OCI-LY7 (cell line): ENCODE measurements at regions of chr1 and their contacts with region 1.

Region 1: GRCh38 chr1:154335025-154335714 is 9.8 kb downstream of the ATP8B2 start:
- DNase-seq: peak; percentile 89
- H3K4me3 ChIP-seq: no peak overlapping the region
- H3K27ac ChIP-seq: no peak overlapping the region
- H3K4me1 ChIP-seq: peaks cover 8% of the 10 kb centered on the region
- CTCF ChIP-seq: peak; percentile 95

Region 2: DNA sequence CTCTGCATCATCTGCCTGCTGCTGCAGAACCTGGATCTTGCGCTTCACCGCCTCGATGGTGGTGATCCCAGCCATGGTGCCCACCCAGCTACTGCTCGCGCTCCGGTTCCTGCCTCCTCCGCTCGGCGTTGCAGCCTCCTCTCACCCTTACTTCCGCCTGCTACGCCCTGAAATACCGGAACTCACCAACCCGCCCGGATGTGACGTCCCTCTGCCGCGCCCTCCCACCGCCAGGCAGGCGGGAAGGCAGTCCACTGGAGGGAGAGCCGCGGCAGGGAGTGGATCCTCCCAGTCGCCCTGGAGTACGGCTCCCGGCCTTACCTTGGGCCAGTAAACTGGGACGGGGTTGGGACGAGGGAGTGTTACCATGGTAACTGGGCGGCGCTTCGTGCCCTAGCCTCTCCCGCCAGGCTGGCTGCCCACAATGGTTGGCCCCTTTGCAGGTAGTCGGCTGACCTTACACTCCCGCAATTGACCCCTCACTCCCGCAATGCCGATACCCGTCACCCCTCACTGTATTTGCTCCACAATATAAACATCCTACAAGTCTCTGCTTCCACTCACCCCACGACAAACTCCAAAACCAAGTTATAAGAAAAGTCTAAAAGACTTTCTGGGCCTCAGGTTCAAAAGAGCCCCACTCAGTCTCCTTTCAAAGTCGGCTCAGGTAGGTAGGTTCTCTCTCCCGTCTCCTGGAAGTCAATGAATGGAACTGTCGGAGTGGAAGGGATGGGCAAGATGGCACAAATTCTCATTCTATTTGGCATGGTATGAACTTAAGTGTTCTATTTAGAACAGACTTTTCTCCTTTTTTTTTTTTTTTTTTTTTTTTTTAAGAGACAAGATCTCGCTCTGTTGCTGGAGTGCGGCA is 151.9 kb before region 1 on chr1:
- CTCF ChIA-PET with region 1: no interaction called
- POLR2A ChIA-PET with region 1: no interaction called
- intact Hi-C with region 1: loop called (anchors 1 kb)
- DNase-seq: peak; percentile 94
- H3K4me3 ChIP-seq: peak overlapping the region; percentile 86
- H3K27ac ChIP-seq: peak overlapping the region; percentile 83
- H3K4me1 ChIP-seq: peaks cover 33% of the 10 kb centered on the region
- CTCF ChIP-seq: no peak

Region 3: DNA sequence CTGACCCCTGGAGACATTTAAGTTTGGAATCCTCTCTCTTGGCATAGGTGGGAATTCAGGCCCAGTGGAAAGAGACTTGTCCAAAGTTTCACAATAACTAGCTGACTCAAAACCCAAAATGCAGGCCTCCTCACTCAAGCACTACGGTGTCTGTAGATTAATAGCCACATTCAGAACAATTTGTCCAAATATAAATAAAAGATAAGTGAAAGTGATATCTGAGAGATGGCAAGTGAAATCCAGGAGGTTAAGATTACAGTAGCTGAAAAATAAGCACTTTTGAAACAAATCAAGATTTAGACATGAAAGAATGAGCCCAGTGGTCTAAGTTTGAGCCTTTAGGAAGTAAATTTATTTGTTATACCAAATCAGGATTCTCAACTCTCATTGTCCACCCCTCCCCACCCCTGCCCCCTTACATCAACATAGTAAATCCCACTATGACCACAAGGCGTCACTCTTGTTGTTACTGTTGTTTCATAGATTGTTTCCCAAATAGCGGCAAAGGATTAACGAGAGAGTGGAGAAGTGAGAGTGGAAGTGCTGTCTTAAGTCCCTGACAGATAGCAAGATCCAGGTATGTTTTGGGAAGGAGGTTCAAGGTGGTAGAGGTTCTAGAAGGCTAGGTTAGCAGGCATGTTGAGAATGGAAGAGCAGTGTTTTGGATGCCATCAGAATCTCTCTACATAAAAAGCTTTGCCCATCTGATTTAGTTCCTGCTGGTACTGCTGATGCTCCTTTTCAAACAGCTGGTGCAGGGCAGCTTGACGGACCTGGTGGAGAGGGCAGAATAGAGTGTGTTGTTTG is 136.2 kb before region 1 on chr1:
- CTCF ChIA-PET with region 1: no interaction called
- POLR2A ChIA-PET with region 1: interaction called, 3 read pairs
- intact Hi-C with region 1: loop called (anchors 1 kb)
- DNase-seq: peak; percentile 71
- H3K4me3 ChIP-seq: no peak overlapping the region
- H3K27ac ChIP-seq: no peak overlapping the region
- H3K4me1 ChIP-seq: no peaks in the 10 kb centered on the region
- CTCF ChIP-seq: peak; percentile 86

Region 4: DNA sequence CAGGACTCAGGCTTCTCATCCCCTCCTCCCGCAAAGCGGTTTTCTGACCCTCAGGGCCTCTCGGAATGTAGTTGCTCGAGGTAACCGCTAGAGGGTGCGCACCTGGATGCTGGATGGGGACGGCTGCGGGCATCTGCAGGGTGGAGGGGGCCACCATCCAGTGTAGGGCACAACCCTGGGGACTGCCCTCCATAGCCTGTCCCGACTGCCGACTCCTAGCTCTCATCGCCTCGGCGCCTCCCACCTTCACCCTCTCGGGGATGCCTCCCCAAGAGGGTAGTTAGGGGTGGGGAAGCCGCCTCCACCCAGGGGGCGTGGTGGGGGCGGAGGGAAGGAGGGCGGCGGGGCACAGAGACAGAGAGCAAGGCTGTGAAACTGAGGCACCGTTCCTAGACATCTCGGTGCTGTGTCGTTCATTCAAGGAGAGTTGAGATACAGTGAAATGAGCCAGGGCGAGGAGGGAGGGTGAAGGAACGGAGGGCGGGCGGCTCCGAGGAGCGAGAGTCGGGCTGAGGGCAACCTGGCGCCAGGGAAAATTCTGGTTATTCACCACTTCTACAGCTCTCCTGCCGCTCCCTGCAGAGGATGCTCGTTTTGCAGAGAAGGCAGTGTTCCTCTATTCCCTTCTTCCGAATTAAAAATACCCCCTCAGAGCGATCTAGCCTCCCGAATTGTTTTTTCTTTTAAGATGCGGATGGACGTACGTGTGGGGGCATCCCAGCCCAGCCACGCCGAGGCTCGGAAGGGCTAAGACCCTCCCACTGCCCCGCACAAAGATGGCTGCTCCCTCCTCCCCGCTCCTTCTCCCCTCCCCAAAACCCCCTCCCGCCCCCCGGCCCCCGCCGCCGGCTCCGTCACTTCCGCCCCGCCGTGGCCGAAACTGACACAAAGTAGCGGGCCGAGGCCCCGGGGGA is 10.2 kb before region 1 on chr1 and contains the start of gene ATP8B2:
- CTCF ChIA-PET with region 1: interaction called, 5 read pairs
- POLR2A ChIA-PET with region 1: interaction called, 6 read pairs
- intact Hi-C with region 1: loop called (anchors 1 kb)
- DNase-seq: peak; percentile 87
- H3K4me3 ChIP-seq: peak within 1 kb of the TSS; percentile 83
- H3K27ac ChIP-seq: peak within 1 kb of the TSS; percentile 19
- H3K4me1 ChIP-seq: peaks cover 22% of the 10 kb centered on the region
- CTCF ChIP-seq: peak; percentile 95
- total RNA-seq, gene ATP8B2: 20.3 and 28.8 TPM in 2 replicates

Region 5: DNA sequence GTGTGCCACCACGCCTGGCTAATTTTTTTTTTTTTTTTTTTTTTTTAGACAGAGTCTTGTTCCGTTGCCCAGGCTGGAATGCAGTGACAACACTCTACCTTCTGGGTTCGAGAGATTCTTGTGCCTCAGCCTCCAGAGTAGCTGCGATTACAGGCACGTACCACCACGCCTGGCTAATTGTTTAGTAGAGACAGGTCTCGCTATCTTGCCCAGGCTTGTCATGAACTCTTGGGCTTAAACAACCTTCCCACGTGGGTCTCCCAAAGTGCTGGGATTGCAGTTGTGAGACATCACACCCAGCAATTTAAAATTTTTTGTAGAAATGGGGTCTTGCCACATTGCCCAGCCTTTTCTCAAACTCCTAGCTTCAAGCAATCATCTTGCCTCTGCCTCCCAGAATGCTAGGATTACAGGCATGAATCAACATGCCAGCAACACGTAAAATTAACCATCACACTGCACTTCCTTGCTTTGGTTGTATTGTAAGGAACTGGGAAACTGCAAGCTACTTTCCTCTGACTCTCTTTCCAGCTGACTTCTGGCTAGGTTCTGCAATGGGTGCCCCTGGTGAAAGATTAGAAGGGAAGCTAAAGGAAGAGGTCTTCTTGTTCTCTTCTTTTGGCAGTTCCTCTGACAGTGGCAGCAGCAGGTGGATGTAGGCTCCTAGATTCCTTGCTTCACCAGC is 56.1 kb after region 1 on chr1:
- CTCF ChIA-PET with region 1: no interaction called
- POLR2A ChIA-PET with region 1: no interaction called
- intact Hi-C with region 1: no loop called
- DNase-seq: no peak
- H3K4me3 ChIP-seq: no peak overlapping the region
- H3K27ac ChIP-seq: no peak overlapping the region
- H3K4me1 ChIP-seq: no peaks in the 10 kb centered on the region
- CTCF ChIP-seq: no peak